ENCODE measurements at regions of chr4 and their contacts with region 1.

Region 1: DNA sequence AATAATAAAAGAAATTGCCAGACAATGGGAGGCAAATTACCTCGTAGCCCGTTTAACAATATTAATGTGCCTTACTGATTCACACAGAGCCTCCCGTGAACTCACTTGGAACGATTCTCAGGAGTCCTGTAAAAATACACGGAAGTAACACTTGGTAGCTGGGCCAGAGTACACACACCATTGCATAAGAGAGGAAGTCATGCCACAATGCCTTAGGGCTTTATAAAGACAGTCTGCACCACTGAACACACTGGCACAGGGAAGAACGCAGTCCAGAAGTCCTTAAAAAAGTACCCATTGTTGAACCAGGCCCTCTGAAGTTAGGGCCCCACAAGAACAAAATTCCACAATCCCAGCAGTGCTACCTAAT is 15.1 kb downstream of the SLC2A9 start:
- DNase-seq: peak; percentile 82
- ATAC-seq: peak; percentile 67
- H3K4me3 ChIP-seq: no peak overlapping the region; the same call in 1 of the 2 replicates
- H3K27ac ChIP-seq: peak overlapping the region; percentile 71
- H3K4me1 ChIP-seq: peaks cover 65% of the 10 kb centered on the region
- H3K27me3 ChIP-seq: no peaks in the 10 kb centered on the region
- CTCF ChIP-seq: no peak
- EP300 ChIP-seq: no peak
- POLR2A ChIP-seq: no peak
- RAD21 ChIP-seq: no peak

Region 2: GRCh38 chr4:9812501-9813340 is 193.5 kb before region 1 on chr4:
- CTCF ChIA-PET with region 1: no interaction called
- POLR2A ChIA-PET with region 1: interaction called, 4 read pairs
- RAD21 ChIA-PET with region 1: interaction called, 8 read pairs
- SMC1A ChIA-PET with region 1: interaction called, 6 read pairs
- in situ Hi-C with region 1: no loop called
- intact Hi-C with region 1: loop called (anchors 2 kb)
- DNase-seq: peak; percentile 57
- ATAC-seq: peak; percentile 83
- H3K4me3 ChIP-seq: no peak overlapping the region
- H3K27ac ChIP-seq: no peak overlapping the region
- H3K4me1 ChIP-seq: peaks cover 3% of the 10 kb centered on the region; the same call in 1 of the 2 replicates
- H3K27me3 ChIP-seq: no peaks in the 10 kb centered on the region; a peak in 1 of 4 replicates
- CTCF ChIP-seq: no peak
- EP300 ChIP-seq: peak; percentile 72 to 87; a peak in 3 of 4 replicates
- POLR2A ChIP-seq: no peak
- RAD21 ChIP-seq: no peak

Region 3: DNA sequence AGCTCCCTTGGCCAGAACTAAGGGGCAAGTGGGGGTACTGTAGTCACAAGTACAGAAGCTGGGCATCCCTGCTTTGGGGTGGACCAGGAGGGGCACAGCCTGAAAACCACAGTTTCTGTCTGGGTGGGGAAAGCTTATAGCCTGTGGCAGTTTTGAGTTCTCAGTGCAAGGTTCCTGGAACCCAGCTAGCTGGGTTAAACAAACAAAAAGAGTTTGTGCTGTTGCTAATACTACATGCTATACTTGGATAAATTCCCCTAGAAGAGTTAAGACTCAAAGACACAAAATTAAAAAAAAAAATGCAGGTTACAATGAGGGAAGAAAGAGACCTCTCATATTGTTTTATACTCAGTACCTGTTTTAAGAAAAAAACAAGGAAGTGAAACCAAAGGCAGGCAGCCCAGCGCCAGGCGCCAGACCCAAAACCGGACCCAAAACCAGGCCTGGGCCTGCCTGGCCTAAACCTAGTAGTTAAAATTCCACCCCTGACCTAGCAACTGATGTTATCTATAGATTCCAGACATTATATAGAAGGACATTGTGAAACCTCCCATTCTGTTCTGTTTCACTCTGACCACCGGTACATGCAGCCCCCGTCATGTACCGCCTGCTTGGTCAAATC is 35.7 kb before region 1 on chr4:
- CTCF ChIA-PET with region 1: interaction called, 17 read pairs
- POLR2A ChIA-PET with region 1: interaction called, 39 read pairs
- RAD21 ChIA-PET with region 1: interaction called, 69 read pairs
- SMC1A ChIA-PET with region 1: interaction called, 70 read pairs
- in situ Hi-C with region 1: no loop called
- intact Hi-C with region 1: loop called (anchors 2 kb)
- DNase-seq: peak; percentile 41
- ATAC-seq: peak; percentile 90
- H3K4me3 ChIP-seq: no peak overlapping the region; the same call in 1 of the 2 replicates
- H3K27ac ChIP-seq: peak overlapping the region; percentile 87
- H3K4me1 ChIP-seq: peaks cover 20% of the 10 kb centered on the region
- H3K27me3 ChIP-seq: no peaks in the 10 kb centered on the region
- CTCF ChIP-seq: no peak
- EP300 ChIP-seq: 0 out of 4 replicates have a peak, but pooled peaks of 1 of the 2 experiments have one; percentile 16
- POLR2A ChIP-seq: no peak
- RAD21 ChIP-seq: no peak

Region 4: GRCh38 chr4:9987749-9988362 is 18.4 kb before region 1 on chr4:
- CTCF ChIA-PET with region 1: interaction called, 7 read pairs
- POLR2A ChIA-PET with region 1: interaction called, 15 read pairs
- RAD21 ChIA-PET with region 1: interaction called, 41 read pairs
- SMC1A ChIA-PET with region 1: interaction called, 43 read pairs
- in situ Hi-C with region 1: no loop called
- intact Hi-C with region 1: no loop called
- DNase-seq: no peak
- ATAC-seq: peak; percentile 80
- H3K4me3 ChIP-seq: peak overlapping the region; percentile 5; the same call in 1 of the 2 replicates
- H3K27ac ChIP-seq: peak overlapping the region; percentile 42
- H3K4me1 ChIP-seq: peaks cover 10% of the 10 kb centered on the region
- H3K27me3 ChIP-seq: no peaks in the 10 kb centered on the region
- CTCF ChIP-seq: no peak
- EP300 ChIP-seq: no peak
- POLR2A ChIP-seq: no peak
- RAD21 ChIP-seq: no peak

Region 5: GRCh38 chr4:10033191-10033881 is 27.1 kb after region 1 on chr4:
- CTCF ChIA-PET with region 1: no interaction called
- POLR2A ChIA-PET with region 1: no interaction called
- RAD21 ChIA-PET with region 1: no interaction called
- SMC1A ChIA-PET with region 1: no interaction called
- in situ Hi-C with region 1: no loop called
- intact Hi-C with region 1: no loop called
- DNase-seq: no peak
- ATAC-seq: peak; percentile 55
- H3K4me3 ChIP-seq: no peak overlapping the region
- H3K27ac ChIP-seq: no peak overlapping the region
- H3K4me1 ChIP-seq: no peaks in the 10 kb centered on the region
- H3K27me3 ChIP-seq: no peaks in the 10 kb centered on the region
- CTCF ChIP-seq: no peak
- EP300 ChIP-seq: no peak
- POLR2A ChIP-seq: no peak
- RAD21 ChIP-seq: no peak

Region 6: DNA sequence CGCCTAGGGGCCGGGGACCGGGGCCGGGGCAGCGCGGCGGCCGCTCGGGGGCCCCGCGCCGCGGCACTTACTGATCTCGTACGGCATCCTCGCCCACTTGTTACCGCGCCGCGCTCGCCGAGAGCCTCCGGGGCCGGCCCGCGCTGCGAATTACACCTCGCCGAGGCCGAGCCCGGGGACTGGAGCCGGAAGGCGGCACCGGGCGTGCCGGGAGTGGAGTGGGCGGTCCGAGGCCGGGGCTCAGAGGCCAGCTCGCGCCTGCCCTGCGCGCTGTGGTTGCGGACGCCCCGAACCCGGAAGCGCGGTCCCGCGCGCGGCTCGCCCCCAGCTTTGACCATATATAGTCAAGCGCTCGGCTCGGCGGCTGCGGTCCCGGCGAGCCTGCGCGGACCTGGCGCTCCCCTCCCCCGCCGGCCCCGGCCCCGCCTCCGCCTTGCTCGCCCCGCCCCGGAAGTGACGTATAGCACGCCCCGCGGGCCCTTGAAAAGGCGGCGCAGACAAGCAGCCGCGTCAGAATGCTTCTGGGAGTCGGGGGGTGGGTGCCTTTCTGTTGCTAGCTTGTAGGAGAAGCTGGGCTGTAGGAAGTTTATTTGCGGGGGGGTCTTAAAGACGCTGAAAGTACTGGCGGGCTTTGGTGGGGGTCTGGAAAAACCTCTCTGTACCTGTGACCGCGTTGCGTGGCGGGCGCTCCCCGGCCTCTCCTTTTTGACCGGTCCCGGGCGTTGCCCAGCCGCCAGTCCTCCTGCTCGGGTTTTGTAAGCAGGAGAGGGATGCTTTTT is 110.6 kb after region 1 on chr4 and contains the start of gene WDR1:
- CTCF ChIA-PET with region 1: interaction called, 11 read pairs
- POLR2A ChIA-PET with region 1: interaction called, 3 read pairs
- RAD21 ChIA-PET with region 1: interaction called, 15 read pairs
- SMC1A ChIA-PET with region 1: interaction called, 4 read pairs
- in situ Hi-C with region 1: no loop called
- intact Hi-C with region 1: no loop called
- DNase-seq: peak; percentile 71
- ATAC-seq: peak; percentile 92
- H3K4me3 ChIP-seq: peak within 1 kb of the TSS; percentile 99
- H3K27ac ChIP-seq: peak within 1 kb of the TSS; percentile 92
- H3K4me1 ChIP-seq: peaks cover 17% of the 10 kb centered on the region
- H3K27me3 ChIP-seq: no peaks in the 10 kb centered on the region
- CTCF ChIP-seq: no peak
- EP300 ChIP-seq: no peak
- POLR2A ChIP-seq: peak; percentile 91
- RAD21 ChIP-seq: no peak
- polyA plus RNA-seq, gene WDR1: 28.5 to 57.1 TPM

Region 7: DNA sequence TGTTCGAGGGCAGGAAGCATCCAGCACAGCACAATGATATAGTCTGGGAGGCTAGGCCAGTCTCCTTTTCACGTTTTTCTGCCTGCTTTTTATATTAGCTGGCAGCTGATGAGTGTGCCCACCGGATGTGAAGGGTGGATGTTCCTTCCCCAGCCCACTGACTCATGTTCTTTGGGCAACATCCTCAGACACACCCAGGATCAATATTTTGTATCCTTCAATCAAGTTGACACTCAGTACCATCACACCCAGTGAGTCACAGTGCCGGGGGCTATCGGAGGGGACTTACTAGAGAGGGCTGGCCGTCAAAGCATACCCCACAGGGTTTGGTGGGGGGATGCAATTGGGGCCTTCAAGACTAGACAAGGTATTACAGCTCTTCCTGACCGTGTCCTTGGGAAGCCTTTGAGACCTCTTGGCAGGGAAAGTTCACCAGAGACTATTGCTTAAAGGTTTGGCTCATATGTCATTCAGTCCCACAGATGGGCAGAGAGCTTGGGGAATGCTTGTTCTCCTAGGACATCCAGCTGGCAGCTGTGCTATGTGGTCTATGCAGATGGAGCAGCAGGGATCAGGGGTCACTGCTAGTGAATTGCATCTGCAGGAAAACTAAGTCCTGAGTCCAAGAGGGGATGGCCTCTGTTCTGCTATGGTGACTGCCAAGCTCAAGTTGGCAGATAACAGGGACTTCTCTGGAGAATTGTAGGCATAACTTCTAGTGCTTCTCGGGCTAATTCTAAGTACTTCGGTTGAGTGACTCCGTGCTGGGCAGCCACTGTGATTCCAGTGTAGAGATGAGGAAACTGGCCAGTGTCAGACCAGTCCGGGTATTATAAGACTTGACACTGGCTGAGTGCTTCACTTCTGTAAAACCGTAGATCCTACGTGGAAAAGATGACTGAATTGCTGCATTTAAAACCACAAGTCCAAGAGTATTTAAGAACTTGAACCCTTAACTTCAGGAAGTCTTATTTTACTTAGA is 123.3 kb after region 1 on chr4:
- CTCF ChIA-PET with region 1: no interaction called
- POLR2A ChIA-PET with region 1: no interaction called
- RAD21 ChIA-PET with region 1: no interaction called
- SMC1A ChIA-PET with region 1: no interaction called
- in situ Hi-C with region 1: no loop called
- intact Hi-C with region 1: no loop called
- DNase-seq: no peak
- ATAC-seq: 0 out of 3 replicates have a peak, but pooled peaks have one; percentile 27
- H3K4me3 ChIP-seq: no peak overlapping the region
- H3K27ac ChIP-seq: no peak overlapping the region
- H3K4me1 ChIP-seq: no peaks in the 10 kb centered on the region
- H3K27me3 ChIP-seq: no peaks in the 10 kb centered on the region; a peak in 1 of 4 replicates
- CTCF ChIP-seq: no peak
- EP300 ChIP-seq: no peak
- POLR2A ChIP-seq: no peak
- RAD21 ChIP-seq: no peak

Region 8: DNA sequence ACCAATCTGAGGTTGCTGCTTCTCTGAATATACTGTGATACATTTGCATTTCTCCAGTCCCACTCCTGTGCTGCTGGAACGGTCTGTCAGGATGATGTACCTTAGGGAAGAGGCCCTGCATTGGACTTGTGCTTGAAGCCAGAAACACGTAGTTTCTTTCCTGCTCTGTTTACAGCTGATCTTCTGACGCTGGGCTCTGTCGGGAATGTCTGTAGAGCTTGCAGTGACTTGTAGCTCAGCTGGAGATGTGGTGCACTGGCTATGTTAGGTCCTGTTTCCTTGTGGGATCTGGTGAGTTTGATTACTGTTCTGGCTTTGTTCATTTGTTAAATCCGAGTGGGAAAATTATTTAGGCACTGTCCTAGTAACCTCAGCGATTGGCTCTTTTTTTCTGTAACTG is 247.5 kb after region 1 on chr4:
- CTCF ChIA-PET with region 1: no interaction called
- POLR2A ChIA-PET with region 1: no interaction called
- RAD21 ChIA-PET with region 1: no interaction called
- SMC1A ChIA-PET with region 1: no interaction called
- in situ Hi-C with region 1: no loop called
- intact Hi-C with region 1: no loop called
- DNase-seq: no peak
- ATAC-seq: no peak
- H3K4me3 ChIP-seq: no peak overlapping the region
- H3K27ac ChIP-seq: no peak overlapping the region
- H3K4me1 ChIP-seq: no peaks in the 10 kb centered on the region
- H3K27me3 ChIP-seq: no peaks in the 10 kb centered on the region; a peak in 1 of 4 replicates
- CTCF ChIP-seq: no peak
- EP300 ChIP-seq: no peak
- POLR2A ChIP-seq: no peak
- RAD21 ChIP-seq: no peak

Measured in GM12878 (cell line).